Left ventricle myocardium inferior (tissue), 1 donor: ENCODE measurements at regions of chr1 and their contacts with region 1.

Region 1: DNA sequence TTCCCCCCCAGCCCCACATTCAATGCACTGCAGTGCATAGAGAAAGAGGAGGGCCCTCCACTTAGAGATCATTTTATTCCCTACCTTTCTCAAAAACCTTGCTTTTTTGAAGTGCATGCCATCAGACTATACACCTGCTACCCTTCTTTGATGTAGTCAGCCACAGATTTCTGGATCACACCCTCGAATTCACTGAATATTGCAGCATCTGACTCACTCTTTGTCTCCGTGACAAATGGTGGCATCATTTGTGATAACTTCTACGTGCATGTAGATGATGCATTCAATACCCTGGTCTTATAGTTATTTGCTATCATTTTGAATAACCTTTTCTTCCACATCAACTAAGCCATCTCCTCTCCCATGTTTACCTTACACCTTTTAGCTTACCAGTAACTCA is 310.3 kb upstream of the SGIP1 start:
- DNase-seq: no peak
- H3K4me3 ChIP-seq: no peak overlapping the region
- H3K27ac ChIP-seq: no peak overlapping the region
- H3K4me1 ChIP-seq: no peaks in the 10 kb centered on the region
- H3K27me3 ChIP-seq: peaks cover 16% of the 10 kb centered on the region
- CTCF ChIP-seq: no peak

Region 2: GRCh38 chr1:66090859-66091457 is 132.7 kb before region 1 on chr1:
- intact Hi-C with region 1: loop called (anchors 10 kb)
- DNase-seq: no peak
- H3K4me3 ChIP-seq: no peak overlapping the region
- H3K27ac ChIP-seq: no peak overlapping the region
- H3K4me1 ChIP-seq: no peaks in the 10 kb centered on the region
- H3K27me3 ChIP-seq: no peaks in the 10 kb centered on the region
- CTCF ChIP-seq: no peak

Region 3: GRCh38 chr1:66282343-66282852 is 58.7 kb after region 1 on chr1:
- intact Hi-C with region 1: no loop called
- DNase-seq: no peak
- H3K4me3 ChIP-seq: no peak overlapping the region
- H3K27ac ChIP-seq: peak overlapping the region; percentile 24
- H3K4me1 ChIP-seq: peaks cover 37% of the 10 kb centered on the region
- H3K27me3 ChIP-seq: no peaks in the 10 kb centered on the region
- CTCF ChIP-seq: no peak